Activated T-helper 2 cell treated with anti-CD3 and anti-CD28 coated beads, Interferon-gamma antibody, Interleukin-2, Interleukin-4, amounts not matched to agents 10 μg/mL and 5 μg/mL and 100 μg/mL, durations not matched to agents 14 hours and 24 hours and 36 hours (primary cell): ENCODE measurements at regions of chr5 and their contacts with region 1.

Region 1: DNA sequence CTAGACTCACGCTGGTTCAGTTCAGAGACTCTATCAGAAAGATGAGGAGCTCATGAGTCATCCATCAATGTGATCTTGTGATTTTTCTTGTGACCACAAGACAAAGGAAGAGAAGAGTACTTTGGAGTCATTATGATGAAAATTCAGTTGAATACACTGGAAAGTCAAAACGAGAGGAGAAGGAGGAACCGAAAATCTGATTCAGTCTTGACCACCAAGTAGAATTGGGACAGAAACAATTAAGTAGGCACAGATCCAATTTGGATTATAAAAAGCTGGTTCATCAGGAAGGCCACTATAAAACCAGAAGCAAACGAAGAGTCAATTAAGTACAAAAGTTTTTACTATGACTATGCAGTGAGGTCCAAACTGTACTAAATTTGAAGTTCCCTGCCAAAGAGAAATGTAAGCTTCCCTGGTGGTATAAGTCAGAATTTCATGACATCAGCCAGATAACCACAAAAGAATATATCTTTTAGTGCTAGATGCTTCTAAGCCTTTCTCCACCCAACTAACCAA is 90.9 kb downstream of the THBS4 start:
- DNase-seq: no peak
- H3K4me3 Mint-ChIP-seq: peak overlapping the region; percentile 28
- H3K27ac Mint-ChIP-seq: peak overlapping the region; percentile 86
- H3K4me1 Mint-ChIP-seq: peaks cover 45% of the 10 kb centered on the region
- H3K27me3 Mint-ChIP-seq: no peaks in the 10 kb centered on the region

Region 2: GRCh38 chr5:80093796-80094195 is 32.2 kb before region 1 on chr5:
- intact Hi-C with region 1: loop called (anchors 5 kb)
- DNase-seq: no peak
- H3K4me3 Mint-ChIP-seq: no peak overlapping the region
- H3K27ac Mint-ChIP-seq: no peak overlapping the region
- H3K4me1 Mint-ChIP-seq: peaks cover 26% of the 10 kb centered on the region
- H3K27me3 Mint-ChIP-seq: no peaks in the 10 kb centered on the region

Region 3: GRCh38 chr5:80184235-80185023 is 58.4 kb after region 1 on chr5:
- intact Hi-C with region 1: loop called (anchors 2 kb)
- DNase-seq: no peak
- H3K4me3 Mint-ChIP-seq: peak overlapping the region; percentile 44
- H3K27ac Mint-ChIP-seq: peak overlapping the region; percentile 84
- H3K4me1 Mint-ChIP-seq: peaks cover 85% of the 10 kb centered on the region
- H3K27me3 Mint-ChIP-seq: no peaks in the 10 kb centered on the region

Region 4: GRCh38 chr5:80246001-80246758 is 120.2 kb after region 1 on chr5:
- intact Hi-C with region 1: loop called (anchors 2 kb)
- DNase-seq: no peak
- H3K4me3 Mint-ChIP-seq: peak overlapping the region; percentile 31
- H3K27ac Mint-ChIP-seq: peak overlapping the region; percentile 78
- H3K4me1 Mint-ChIP-seq: peaks cover 43% of the 10 kb centered on the region
- H3K27me3 Mint-ChIP-seq: no peaks in the 10 kb centered on the region

Region 5: DNA sequence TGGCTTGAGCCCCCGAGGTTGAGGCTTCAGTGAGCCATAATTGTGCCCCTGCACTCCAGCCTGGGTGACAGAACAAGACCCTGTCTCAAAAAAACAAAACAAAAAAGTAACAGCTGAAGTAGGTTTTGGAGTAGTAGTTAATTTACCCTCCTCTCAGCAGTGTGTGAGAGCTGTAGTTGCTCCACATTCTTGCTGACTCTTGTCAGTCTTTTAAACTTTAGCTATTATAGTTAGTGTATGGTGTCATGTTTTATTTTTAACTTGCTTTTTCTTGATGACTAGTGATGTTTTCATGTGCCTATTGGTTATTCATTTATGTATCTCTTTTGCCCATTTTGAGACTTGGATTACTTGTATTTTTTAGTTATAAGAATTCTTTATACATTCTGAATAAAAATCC is 581.6 kb after region 1 on chr5:
- intact Hi-C with region 1: no loop called
- DNase-seq: no peak
- H3K4me3 Mint-ChIP-seq: no peak overlapping the region
- H3K27ac Mint-ChIP-seq: no peak overlapping the region
- H3K4me1 Mint-ChIP-seq: peaks cover 21% of the 10 kb centered on the region
- H3K27me3 Mint-ChIP-seq: no peaks in the 10 kb centered on the region

Region 6: GRCh38 chr5:81006947-81007636 is 881.1 kb after region 1 on chr5:
- intact Hi-C with region 1: loop called (anchors 5 kb)
- DNase-seq: peak; percentile 40
- H3K4me3 Mint-ChIP-seq: peak overlapping the region; percentile 73
- H3K27ac Mint-ChIP-seq: peak overlapping the region; percentile 90
- H3K4me1 Mint-ChIP-seq: peaks cover 46% of the 10 kb centered on the region
- H3K27me3 Mint-ChIP-seq: no peaks in the 10 kb centered on the region